Activated T-helper 1 cell treated with anti-CD3 and anti-CD28 coated beads, Interleukin-12 subunit alpha, Interleukin-12 subunit beta, Interleukin-2, Interleukin-4 antibody, amounts not matched to agents 30 ng/mL and 10 ng/mL and 1 ng/mL, durations not matched to agents 14 hours and 24 hours and 36 hours (primary cell): ENCODE measurements at regions of chr7 and their contacts with region 1.

Region 1: DNA sequence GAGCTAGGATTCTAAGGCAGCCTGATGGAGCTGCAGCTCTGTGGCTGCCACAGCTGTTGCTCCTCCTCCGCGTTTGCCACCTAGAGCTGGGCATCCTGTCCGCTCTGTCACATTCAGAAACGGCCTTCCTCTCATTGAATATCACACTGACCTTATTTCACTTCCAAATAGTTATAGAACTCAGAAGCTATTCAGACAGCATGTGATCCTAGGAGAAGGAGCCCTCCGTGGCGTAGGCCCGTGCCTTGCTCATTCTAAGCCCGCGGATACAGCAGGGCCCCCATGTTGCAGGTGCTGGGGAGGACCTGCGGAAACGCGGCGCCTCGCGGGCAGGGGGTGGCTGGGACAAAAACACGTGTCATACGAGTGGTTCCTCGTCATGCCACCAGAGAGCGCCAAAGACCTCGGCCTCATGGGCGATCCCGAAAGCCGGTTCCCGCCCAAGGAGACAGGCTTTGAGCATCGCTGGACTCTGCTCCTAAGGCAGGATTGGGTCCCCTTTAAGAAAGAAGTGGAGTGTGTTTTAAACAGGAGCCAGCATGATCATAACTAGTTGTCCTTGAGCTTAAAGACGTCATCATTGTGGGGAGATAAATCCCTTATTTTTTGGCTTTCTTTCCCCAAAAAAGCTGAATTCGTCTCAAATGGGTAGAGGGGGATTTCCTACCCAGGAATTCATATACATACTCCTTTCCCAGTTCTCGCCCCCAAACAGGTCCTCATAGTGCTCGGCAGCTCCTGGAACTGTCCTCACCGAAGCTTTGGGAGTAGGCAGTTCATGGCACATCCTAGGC is 17.9 kb upstream of the FIGNL1 start:
- DNase-seq: peak; percentile 69
- H3K4me3 Mint-ChIP-seq: no peak overlapping the region
- H3K27ac Mint-ChIP-seq: no peak overlapping the region
- H3K4me1 Mint-ChIP-seq: peaks cover 12% of the 10 kb centered on the region
- H3K27me3 Mint-ChIP-seq: peaks cover 12% of the 10 kb centered on the region

Region 2: DNA sequence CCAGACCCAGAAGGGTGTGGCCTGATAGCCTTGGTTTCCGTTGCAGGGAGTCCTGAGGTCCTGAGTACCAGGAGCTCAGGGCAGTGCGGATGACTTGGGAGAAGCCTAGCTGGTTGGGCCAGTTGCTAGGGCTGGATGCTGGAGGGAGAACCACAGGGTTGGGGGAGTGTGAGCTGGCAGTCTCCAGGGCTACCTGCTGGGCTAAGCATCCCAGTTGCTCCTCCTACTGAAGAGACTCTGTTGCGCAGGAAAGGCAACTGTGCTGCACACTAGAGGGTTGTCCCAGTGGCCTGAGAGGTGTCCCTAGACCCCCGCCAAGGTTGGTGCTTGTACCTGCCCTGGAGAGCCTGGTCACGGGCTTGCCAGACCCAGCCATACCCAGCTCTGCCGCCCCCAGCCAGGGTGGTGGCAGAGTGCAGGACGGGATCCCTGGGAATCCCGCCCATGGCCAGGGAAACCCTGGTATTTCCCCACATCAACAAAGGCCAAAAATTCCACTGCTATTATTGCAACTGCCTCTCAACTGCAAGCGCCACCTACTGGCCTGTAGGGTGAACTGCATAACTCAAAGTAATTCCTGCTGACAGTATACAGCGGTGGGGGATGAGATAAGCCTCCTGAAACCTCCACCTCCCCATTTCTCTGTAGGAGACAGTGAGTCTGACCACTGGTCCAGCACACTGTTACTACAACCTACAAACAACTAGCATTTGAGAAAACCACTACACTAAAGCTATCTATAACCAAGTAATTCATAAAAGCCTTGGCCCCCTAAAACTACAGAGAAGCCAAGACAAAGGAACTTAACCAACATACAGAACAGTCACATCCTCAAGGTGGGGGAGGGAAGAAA is 164.8 kb after region 1 on chr7:
- intact Hi-C with region 1: loop called (anchors 1 kb)
- DNase-seq: peak; percentile 24
- H3K4me3 Mint-ChIP-seq: no peak overlapping the region
- H3K27ac Mint-ChIP-seq: no peak overlapping the region
- H3K4me1 Mint-ChIP-seq: peaks cover 4% of the 10 kb centered on the region
- H3K27me3 Mint-ChIP-seq: peaks cover 17% of the 10 kb centered on the region

Region 3: DNA sequence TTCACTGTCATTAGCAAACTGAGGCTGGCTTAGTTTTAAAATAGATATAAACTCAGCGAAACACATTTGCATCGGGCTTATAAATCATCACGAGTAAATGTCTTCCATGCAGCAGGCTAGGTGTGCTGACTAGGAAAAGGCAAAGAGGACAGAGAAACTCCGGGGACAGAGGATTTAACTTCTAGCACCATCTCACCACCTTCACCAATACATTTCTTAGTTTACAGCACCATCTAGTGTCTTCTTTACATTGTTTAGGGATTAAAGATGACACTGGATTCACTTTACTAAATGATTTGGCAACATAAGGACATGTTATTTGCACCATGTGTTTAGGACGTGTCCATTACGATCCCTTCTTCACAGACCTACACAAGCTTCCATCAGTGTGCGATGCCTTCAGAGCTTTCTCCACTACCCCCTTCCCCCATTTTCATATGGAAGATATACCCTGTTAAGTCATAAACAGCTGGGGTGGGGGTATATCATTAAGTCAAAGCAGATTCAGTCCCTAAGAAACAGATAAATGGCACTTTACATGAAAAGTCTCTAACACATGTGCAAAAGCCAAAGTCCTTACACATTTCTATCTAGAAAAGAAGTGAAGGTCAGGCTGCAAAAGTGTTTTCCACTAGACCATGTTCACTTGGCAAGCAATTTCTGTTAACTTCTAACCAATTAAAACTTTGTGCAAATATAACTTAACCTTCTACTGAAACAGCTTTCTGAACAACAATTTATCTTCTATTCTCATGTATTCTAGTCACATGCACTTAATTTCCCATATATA is 211.4 kb after region 1 on chr7:
- intact Hi-C with region 1: loop called (anchors 1 kb)
- DNase-seq: no peak
- H3K4me3 Mint-ChIP-seq: no peak overlapping the region
- H3K27ac Mint-ChIP-seq: no peak overlapping the region
- H3K4me1 Mint-ChIP-seq: no peaks in the 10 kb centered on the region
- H3K27me3 Mint-ChIP-seq: peaks cover 11% of the 10 kb centered on the region

Region 4: DNA sequence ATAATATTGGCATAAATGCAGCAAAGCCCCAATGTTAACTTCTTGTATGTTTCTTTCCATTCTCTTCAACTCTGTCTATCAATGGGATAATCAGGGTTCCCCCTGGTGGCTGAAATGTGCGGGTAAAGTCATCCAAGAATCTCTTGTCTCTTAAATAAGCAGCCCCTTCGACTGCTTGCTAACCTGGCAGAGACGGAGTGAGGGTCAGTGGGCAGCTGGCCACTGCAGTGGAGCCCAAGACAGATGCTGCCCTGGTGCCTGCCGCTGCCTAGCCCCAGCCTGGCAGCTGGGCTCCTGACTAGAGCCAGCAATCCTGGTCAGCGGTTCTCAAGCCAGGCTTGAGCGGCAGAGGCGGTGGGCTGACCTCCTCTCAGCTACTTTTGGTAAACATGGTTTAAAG is 599.7 kb after region 1 on chr7:
- intact Hi-C with region 1: loop called (anchors 1 kb)
- DNase-seq: peak; percentile 17
- H3K4me3 Mint-ChIP-seq: no peak overlapping the region
- H3K27ac Mint-ChIP-seq: no peak overlapping the region
- H3K4me1 Mint-ChIP-seq: no peaks in the 10 kb centered on the region
- H3K27me3 Mint-ChIP-seq: peaks cover 5% of the 10 kb centered on the region